AG04449 (cell line): ENCODE measurements at regions of chr7 and their contacts with region 1.

Region 1: GRCh38 chr7:102272075-102272917 is 14.4 kb upstream of the SH2B2 start:
- DNase-seq: peak; percentile 19
- H3K4me3 ChIP-seq: no peak overlapping the region
- CTCF ChIP-seq: peak; percentile 88

Region 2: DNA sequence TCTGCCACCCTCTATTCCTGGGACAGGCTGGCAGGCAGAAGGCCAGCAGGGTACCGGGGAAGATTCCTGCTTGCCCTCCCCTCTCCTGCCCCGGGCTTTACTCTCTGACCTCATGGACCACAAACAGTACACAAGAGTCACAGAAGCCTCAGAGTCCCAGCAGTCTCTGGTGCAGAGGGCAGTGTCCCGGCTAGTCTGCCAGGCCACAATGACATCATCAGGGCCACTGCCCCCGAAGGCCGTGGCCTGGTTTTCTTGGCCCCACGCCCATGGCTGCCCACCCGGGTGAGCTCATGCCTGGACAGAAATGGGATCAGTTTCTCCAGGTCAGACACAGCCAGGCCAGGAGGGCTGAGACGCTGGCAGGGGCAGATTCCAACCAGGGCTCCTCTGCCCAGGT is 735.1 kb before region 1 on chr7:
- CTCF ChIA-PET with region 1: interaction called, 98 read pairs
- POLR2A ChIA-PET with region 1: no interaction called
- DNase-seq: no peak
- H3K4me3 ChIP-seq: no peak overlapping the region
- CTCF ChIP-seq: no peak

Region 3: DNA sequence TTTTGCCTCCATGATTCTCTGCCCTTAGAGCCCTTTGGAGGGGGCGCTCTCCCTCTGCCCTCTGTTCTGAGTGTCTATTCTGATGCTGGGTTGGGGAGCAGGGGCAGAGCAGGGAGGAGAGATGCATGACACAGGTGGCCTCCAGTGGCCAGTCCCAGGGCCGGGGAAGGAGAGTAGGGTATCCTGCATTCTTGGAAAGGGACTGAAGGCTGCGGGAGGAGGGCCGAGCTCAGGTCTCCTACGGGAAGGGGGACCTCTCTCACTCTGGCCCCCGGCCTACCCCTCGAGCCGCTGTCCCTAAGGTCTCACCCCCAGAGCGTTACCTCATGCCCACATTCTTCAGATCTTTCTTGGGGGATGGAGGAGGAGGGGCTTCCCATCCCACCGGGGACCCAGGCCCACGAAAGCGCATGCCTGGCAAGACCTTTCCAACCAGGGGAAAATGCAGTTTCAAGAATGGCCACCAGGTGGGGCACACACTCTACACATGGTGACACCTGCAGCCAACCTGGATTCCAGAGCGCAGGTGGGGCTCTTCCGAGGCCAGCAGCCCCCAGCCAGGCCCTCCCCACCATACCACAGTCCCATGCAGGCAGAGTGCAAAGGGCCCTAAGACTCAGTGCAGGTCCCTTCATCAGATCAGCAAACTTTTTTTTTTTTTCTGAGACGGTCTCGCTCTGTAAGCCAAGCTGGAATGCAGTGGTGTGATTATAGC is 729.6 kb before region 1 on chr7:
- CTCF ChIA-PET with region 1: interaction called, 98 read pairs
- POLR2A ChIA-PET with region 1: no interaction called
- DNase-seq: no peak
- H3K4me3 ChIP-seq: no peak overlapping the region
- CTCF ChIP-seq: peak; percentile 85

Region 4: GRCh38 chr7:101688183-101688831 is 584.0 kb before region 1 on chr7:
- CTCF ChIA-PET with region 1: interaction called, 12 read pairs
- POLR2A ChIA-PET with region 1: no interaction called
- DNase-seq: no peak
- H3K4me3 ChIP-seq: peak overlapping the region; percentile 40
- CTCF ChIP-seq: peak; percentile 96